H1 (cell line): ENCODE measurements at regions of chr3 and their contacts with region 1.

Region 1: GRCh38 chr3:76724075-76724474 is 315.8 kb upstream of the ROBO2 start:
- DNase-seq: no peak
- H3K4me3 ChIP-seq: no peak overlapping the region
- H3K27ac ChIP-seq: no peak overlapping the region
- H3K4me1 ChIP-seq: no peaks in the 10 kb centered on the region
- H3K27me3 ChIP-seq: no peaks in the 10 kb centered on the region
- CTCF ChIP-seq: peak; percentile 29 to 50 (median 33); a peak in 3 of 4 replicates
- EP300 ChIP-seq: no peak
- POLR2A ChIP-seq: no peak
- RAD21 ChIP-seq: no peak

Region 2: GRCh38 chr3:76610150-76610549 is 113.9 kb before region 1 on chr3:
- CTCF ChIA-PET with region 1: no interaction called
- POLR2A ChIA-PET with region 1: no interaction called
- DNase-seq: no peak
- H3K4me3 ChIP-seq: no peak overlapping the region
- H3K27ac ChIP-seq: no peak overlapping the region
- H3K4me1 ChIP-seq: no peaks in the 10 kb centered on the region
- H3K27me3 ChIP-seq: no peaks in the 10 kb centered on the region
- CTCF ChIP-seq: no peak
- EP300 ChIP-seq: no peak
- POLR2A ChIP-seq: no peak
- RAD21 ChIP-seq: no peak

Region 3: GRCh38 chr3:76735152-76735551 is 11.1 kb after region 1 on chr3:
- CTCF ChIA-PET with region 1: interaction called, 13 read pairs
- POLR2A ChIA-PET with region 1: no interaction called
- DNase-seq: no peak
- H3K4me3 ChIP-seq: no peak overlapping the region
- H3K27ac ChIP-seq: no peak overlapping the region
- H3K4me1 ChIP-seq: no peaks in the 10 kb centered on the region; a peak in 2 of 7 replicates
- H3K27me3 ChIP-seq: no peaks in the 10 kb centered on the region
- CTCF ChIP-seq: no peak
- EP300 ChIP-seq: no peak
- POLR2A ChIP-seq: no peak
- RAD21 ChIP-seq: no peak